HCT116 (cell line): ENCODE measurements at regions of chr5 and their contacts with region 1.

Region 1: DNA sequence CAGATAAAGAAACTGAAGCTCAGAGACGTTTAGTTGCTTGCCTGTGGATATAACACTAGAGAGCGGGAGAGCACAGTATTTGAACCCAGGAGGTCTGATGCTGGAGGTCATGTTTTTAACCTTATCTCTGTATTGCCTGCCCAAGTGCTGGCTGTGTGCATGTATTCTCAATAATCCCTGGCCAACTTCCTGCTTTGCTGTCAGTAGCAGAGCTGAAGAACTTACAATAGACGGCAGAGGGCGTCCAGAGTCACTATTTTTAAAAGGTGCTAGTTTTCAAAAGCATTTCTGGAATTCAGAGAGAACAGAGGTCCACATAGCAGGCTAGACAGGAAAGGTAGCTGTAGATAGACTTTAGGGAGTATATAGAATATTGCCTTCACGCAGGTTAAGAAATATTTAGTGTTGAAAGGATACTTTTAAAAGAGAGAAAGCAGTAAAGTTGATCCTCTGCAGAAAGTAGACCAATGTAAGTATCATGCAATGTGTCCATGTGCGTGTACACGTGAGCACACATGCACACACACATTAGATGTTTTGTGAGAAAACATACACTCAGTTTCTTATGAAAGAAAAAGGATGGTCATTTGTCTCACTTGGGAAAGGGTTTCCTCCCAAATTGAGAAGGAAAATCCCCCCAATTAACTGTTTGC is 46.3 kb downstream of the PTCD2 start:
- DNase-seq: peak; percentile 39
- ATAC-seq: peak; percentile 88
- H3K4me3 ChIP-seq: no peak overlapping the region
- H3K27ac ChIP-seq: no peak overlapping the region
- H3K4me1 ChIP-seq: peaks cover 10 to 21% of the 10 kb centered on the region in 2 experiments
- H3K27me3 ChIP-seq: no peaks in the 10 kb centered on the region
- CTCF ChIP-seq: peak; percentile 57 to 75 (median 63); a peak in 5 of 6 replicates
- POLR2A ChIP-seq: no peak
- RAD21 ChIP-seq: peak; percentile 75

Region 2: GRCh38 chr5:72355706-72356299 is 10.6 kb before region 1 on chr5:
- CTCF ChIA-PET with region 1: interaction called, 12 read pairs
- POLR2A ChIA-PET with region 1: no interaction called
- RAD21 ChIA-PET with region 1: no interaction called
- intact Hi-C with region 1: no loop called
- DNase-seq: no peak
- ATAC-seq: peak; percentile 88
- H3K4me3 ChIP-seq: no peak overlapping the region
- H3K27ac ChIP-seq: no peak overlapping the region
- H3K4me1 ChIP-seq: no peaks in the 10 kb centered on the region
- H3K27me3 ChIP-seq: no peaks in the 10 kb centered on the region
- CTCF ChIP-seq: peak; percentile 38 to 50 (median 50); a peak in 5 of 6 replicates
- POLR2A ChIP-seq: no peak
- RAD21 ChIP-seq: peak; percentile 59

Region 3: DNA sequence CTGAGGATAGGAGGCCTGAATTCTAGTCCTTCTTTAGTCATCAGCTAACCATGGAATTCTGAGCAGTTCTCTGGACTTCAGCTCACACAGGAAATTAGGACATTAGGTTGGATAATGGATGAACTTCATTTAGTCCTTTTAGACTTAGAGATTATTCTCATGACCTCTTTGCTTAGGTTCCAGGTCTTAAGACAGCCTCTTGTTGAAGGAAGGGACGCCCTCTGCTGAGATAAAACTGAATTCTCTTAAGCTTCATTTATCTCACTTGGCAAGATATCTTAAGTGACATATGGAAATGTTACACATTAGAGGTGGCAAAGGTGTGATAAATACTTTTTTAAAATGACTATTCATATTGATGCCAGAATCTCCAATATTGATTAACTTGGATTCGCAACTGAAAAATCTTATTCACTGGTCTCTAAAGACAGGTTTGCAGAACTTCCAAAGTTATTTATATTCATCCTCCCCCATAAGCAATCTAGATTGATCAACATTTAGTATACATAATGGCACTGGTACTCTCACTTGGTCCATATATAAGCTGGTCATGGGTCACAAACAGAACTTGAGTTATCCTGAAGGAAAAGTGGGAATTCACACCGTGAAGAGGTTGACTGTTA is 157.6 kb after region 1 on chr5:
- CTCF ChIA-PET with region 1: interaction called, 27 read pairs
- POLR2A ChIA-PET with region 1: no interaction called
- RAD21 ChIA-PET with region 1: no interaction called
- intact Hi-C with region 1: loop called (anchors 1 kb)
- DNase-seq: peak; percentile 67
- ATAC-seq: peak; percentile 82
- H3K4me3 ChIP-seq: no peak overlapping the region
- H3K27ac ChIP-seq: no peak overlapping the region
- H3K4me1 ChIP-seq: no peaks in the 10 kb centered on the region
- H3K27me3 ChIP-seq: no peaks in the 10 kb centered on the region
- CTCF ChIP-seq: peak; percentile 44 to 71 (median 61); a peak in 5 of 6 replicates
- POLR2A ChIP-seq: no peak
- RAD21 ChIP-seq: peak; percentile 87

Region 4: DNA sequence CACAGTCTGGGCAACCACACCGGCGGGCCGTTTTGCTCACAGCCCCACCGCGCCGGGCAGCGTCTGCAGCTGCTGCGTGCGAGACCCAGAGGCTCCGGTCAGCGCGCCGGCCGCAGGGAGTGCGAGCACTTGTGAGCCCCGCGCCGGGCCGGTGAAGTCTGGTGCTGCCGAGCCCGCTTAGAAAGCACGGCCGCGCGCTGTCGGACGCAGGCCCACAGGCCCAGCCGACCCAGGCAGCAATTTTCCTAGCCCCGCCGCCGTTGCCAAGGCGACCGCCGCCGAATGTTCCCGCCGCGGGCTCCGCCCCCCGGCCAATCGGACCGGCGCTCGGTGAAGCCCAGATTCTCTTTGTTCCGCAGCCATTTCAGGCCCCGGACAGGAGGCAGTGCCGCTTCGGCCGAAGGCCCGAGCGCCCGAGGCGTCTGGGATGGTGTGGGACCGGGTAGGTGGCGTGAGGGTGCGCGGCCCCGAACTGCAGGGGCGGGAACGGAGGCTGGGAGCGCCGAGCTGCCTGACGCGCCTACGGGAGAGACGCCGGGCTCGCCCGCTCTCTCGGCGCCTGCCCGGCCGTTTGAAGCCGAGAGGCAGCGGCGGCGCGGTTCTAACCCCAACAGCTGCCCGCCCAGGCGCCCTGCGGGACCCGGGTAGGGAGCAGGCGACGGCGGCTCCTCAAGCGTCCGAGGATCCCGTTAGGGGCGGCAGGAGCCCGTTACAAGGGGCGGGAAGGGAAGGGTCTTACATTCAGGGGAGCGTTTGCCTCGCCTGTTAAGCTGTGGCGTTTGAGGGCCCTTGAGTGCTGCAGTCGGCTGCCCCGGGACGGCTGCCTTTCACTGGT is 450.1 kb after region 1 on chr5 and contains the start of gene TNPO1:
- CTCF ChIA-PET with region 1: interaction called, 10 read pairs
- POLR2A ChIA-PET with region 1: no interaction called
- RAD21 ChIA-PET with region 1: no interaction called
- intact Hi-C with region 1: loop called (anchors 5 kb)
- DNase-seq: peak; percentile 79
- ATAC-seq: peak; percentile 88
- H3K4me3 ChIP-seq: peak within 1 kb of the TSS; percentile 69 to 71
- H3K27ac ChIP-seq: peak within 1 kb of the TSS; percentile 83
- H3K4me1 ChIP-seq: peaks cover 16 to 23% of the 10 kb centered on the region in 2 experiments; a peak in 3 of 4 replicates
- H3K27me3 ChIP-seq: no peaks in the 10 kb centered on the region
- CTCF ChIP-seq: no peak
- POLR2A ChIP-seq: peak; percentile 70
- RAD21 ChIP-seq: no peak
- total RNA-seq, gene TNPO1: 104 TPM

Region 5: DNA sequence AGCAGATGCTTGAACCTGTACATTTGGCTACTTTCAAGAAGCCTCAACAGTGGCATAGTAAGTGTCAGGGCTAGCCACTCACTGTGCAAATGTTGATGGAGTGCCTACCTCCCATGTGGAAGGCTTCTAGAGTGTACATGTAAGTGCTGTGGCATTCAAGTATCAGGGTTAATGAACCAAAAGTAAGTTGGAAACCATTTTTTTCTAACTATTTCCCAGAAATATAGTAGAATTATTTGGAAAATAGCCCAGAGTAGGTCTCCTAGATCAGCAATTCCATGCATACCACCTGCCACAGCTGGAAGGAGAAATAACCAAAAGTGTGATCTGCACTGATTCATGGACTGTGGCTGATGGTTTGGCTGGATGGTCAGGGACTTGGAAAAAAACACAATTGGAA is 1028.8 kb after region 1 on chr5:
- CTCF ChIA-PET with region 1: no interaction called
- POLR2A ChIA-PET with region 1: no interaction called
- RAD21 ChIA-PET with region 1: no interaction called
- intact Hi-C with region 1: no loop called
- DNase-seq: no peak
- ATAC-seq: no peak
- H3K4me3 ChIP-seq: no peak overlapping the region
- H3K27ac ChIP-seq: no peak overlapping the region
- H3K4me1 ChIP-seq: peaks cover 0 to 10% of the 10 kb centered on the region in 2 experiments; a peak in 3 of 4 replicates
- H3K27me3 ChIP-seq: no peaks in the 10 kb centered on the region
- CTCF ChIP-seq: no peak
- POLR2A ChIP-seq: no peak
- RAD21 ChIP-seq: no peak